Psoas muscle (tissue), 8 donors: ENCODE measurements at regions of chr11 and their contacts with region 1.

Region 1: GRCh38 chr11:64916775-64917662 is at the start of gene ATG2A:
- DNase-seq: peak; percentile 99 to 100
- ATAC-seq: peak; percentile 96 to 99 (median 98)
- H3K4me3 ChIP-seq: peak within 1 kb of the TSS; percentile 91
- H3K27ac ChIP-seq: peak within 1 kb of the TSS; percentile 84
- H3K4me1 ChIP-seq: peaks cover 25% of the 10 kb centered on the region
- H3K27me3 ChIP-seq: no peaks in the 10 kb centered on the region
- CTCF ChIP-seq: no peak
- total RNA-seq, gene ATG2A: 19.5 to 21.6 (median 20.6) TPM

Region 2: GRCh38 chr11:64996710-64997380 is 79.8 kb after region 1 on chr11 and contains the start of gene BATF2:
- intact Hi-C with region 1: loop called in 1 of 2 experiments (anchors 5 kb)
- DNase-seq: peak; percentile 75 to 86
- ATAC-seq: peak; percentile 95 to 99 (median 98)
- H3K4me3 ChIP-seq: peak within 1 kb of the TSS; percentile 74
- H3K27ac ChIP-seq: peak within 1 kb of the TSS; percentile 80
- H3K4me1 ChIP-seq: peaks cover 22% of the 10 kb centered on the region
- H3K27me3 ChIP-seq: no peaks in the 10 kb centered on the region
- CTCF ChIP-seq: peak; percentile 42
- total RNA-seq, gene BATF2: 1.7 to 2.5 (median 2.4) TPM